ENCODE measurements at regions of chr18 and their contacts with region 1.

Region 1: DNA sequence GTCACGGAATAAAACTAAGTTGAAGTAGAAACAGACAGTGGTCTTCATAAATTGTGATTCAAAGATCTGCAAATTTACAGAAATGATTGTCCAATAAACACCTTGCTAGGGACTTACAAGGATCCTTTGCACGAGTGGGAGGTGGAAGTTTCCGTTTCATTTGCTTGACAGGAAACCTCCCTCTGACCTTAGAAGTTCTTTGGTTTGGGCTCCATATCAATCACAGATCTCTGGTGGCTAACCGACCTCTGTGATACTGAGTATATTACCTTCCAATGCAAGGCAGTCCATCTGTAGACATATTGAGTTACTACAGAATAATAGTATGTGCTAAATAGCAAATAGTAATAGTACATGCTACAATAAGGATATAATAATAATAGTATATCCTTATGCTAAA is 33.7 kb upstream of the RNF152 start:
- DNase-seq: peak; percentile 26
- H3K4me3 Mint-ChIP-seq: peak overlapping the region; percentile 63
- H3K27ac Mint-ChIP-seq: peak overlapping the region; percentile 74
- H3K4me1 Mint-ChIP-seq: peaks cover 40% of the 10 kb centered on the region
- H3K27me3 Mint-ChIP-seq: peaks cover 12% of the 10 kb centered on the region

Region 2: DNA sequence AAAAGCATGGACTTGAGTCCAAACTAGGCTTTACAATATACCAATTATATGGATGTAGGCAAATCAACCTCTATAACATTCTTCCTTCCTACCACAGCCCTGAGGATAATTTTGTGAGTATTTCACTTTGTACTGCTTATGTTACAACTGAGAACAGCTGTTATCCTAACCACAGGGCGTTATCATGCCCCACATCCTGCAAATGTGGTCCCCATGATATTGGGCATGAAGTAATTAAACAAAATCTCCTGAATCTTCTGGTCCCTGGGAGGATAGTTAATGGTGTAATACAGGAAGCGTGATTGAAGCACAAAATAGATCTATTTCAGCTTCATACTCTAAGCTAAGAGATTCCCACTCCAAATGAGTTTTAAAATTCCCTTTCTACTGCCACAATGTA is 369.7 kb before region 1 on chr18:
- intact Hi-C with region 1: no loop called
- DNase-seq: no peak
- H3K4me3 Mint-ChIP-seq: no peak overlapping the region
- H3K27ac Mint-ChIP-seq: no peak overlapping the region
- H3K4me1 Mint-ChIP-seq: peaks cover 4% of the 10 kb centered on the region
- H3K27me3 Mint-ChIP-seq: peaks cover 4% of the 10 kb centered on the region

Region 3: DNA sequence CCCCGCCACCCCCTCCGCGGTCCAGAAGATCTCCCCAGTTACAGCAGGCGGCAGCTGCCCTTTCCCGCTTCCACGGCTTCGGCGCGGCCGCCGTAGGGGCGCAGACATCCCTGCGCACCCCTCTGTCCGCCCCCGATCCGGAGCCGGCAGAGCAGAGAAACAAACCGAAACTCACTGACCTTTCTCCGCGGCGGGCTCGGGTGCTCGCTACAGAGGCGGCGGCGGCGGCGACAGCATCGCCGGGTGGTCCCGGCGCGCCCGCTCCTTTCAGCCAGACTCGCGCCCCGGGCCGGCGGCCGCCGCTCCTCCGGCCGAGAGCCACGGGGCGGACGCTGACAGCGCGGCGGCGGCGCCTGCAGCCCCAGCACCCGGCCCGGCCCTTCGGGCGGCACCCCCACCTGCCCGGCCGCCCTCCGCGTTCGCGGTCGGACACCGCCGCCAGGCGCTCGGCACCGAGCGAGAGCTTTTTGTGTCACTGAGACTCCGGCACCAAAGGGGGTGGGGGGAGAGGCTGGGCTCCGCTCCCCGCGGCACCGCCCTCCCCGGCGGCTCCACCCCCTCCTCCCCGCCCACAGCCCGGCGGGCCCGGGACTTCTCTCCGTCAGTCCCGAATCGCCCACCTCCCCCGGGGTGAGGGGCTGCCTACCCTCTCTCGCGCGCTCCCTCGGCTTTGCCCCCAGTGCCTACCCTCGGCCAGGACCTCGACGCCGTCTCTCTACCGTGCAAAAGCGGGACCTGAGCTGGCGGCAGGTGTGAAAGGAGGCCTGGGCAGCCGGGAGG is 32.4 kb before region 1 on chr18:
- intact Hi-C with region 1: loop called (anchors 5 kb)
- DNase-seq: peak; percentile 53
- H3K4me3 Mint-ChIP-seq: peak overlapping the region; percentile 82
- H3K27ac Mint-ChIP-seq: no peak overlapping the region
- H3K4me1 Mint-ChIP-seq: peaks cover 13% of the 10 kb centered on the region
- H3K27me3 Mint-ChIP-seq: peaks cover 65% of the 10 kb centered on the region

Region 4: GRCh38 chr18:61901323-61901986 is 25.1 kb before region 1 on chr18:
- intact Hi-C with region 1: loop called (anchors 2 kb)
- DNase-seq: no peak
- H3K4me3 Mint-ChIP-seq: no peak overlapping the region
- H3K27ac Mint-ChIP-seq: no peak overlapping the region
- H3K4me1 Mint-ChIP-seq: no peaks in the 10 kb centered on the region
- H3K27me3 Mint-ChIP-seq: peaks cover 41% of the 10 kb centered on the region

Region 5: GRCh38 chr18:61943175-61943964 is 16.8 kb after region 1 on chr18:
- intact Hi-C with region 1: loop called (anchors 1 kb)
- DNase-seq: no peak
- H3K4me3 Mint-ChIP-seq: no peak overlapping the region
- H3K27ac Mint-ChIP-seq: no peak overlapping the region
- H3K4me1 Mint-ChIP-seq: peaks cover 18% of the 10 kb centered on the region
- H3K27me3 Mint-ChIP-seq: peaks cover 16% of the 10 kb centered on the region

Region 6: DNA sequence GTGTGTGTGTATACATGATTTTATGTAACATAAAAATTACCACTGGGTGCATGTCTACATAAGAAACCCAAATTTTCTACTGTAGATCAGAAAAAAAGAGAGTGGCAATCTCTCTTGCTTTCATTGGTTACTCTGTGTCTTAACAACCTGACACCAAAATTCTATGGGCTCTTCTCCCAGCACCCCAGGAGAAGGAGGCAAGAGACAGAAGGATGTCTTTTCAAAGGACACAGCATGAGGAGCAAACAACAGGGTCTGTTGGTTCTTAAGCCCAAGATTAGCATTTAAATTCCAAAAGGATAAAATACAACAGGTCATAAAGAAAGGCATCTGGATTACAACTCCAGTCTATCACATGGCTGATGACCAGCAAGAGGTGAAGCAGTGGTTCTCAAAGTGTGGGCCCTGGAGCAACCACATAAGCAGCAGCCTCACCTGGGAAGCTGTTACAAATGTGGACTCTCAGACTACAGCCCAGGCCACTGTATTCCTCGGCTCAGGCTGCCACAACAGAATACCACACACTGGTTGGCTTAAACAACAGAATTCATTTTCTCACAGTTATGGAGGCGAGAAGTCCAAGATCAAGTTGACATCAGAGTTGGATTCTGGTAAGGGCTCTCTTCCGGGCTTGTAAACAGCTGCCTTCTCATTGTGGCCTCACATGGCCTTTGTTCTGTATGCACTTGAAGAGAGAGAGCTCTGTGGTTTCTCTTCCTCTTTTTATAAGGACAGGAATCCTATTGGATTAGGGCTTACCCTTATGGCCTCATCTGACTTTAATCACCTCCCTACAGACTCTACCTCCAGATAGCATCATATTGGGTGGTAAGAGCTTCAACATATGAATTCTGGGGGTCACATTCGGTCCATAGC is 46.1 kb after region 1 on chr18:
- intact Hi-C with region 1: loop called (anchors 2 kb)
- DNase-seq: no peak
- H3K4me3 Mint-ChIP-seq: no peak overlapping the region
- H3K27ac Mint-ChIP-seq: peak overlapping the region; percentile 27
- H3K4me1 Mint-ChIP-seq: peaks cover 36% of the 10 kb centered on the region
- H3K27me3 Mint-ChIP-seq: peaks cover 2% of the 10 kb centered on the region

Region 7: DNA sequence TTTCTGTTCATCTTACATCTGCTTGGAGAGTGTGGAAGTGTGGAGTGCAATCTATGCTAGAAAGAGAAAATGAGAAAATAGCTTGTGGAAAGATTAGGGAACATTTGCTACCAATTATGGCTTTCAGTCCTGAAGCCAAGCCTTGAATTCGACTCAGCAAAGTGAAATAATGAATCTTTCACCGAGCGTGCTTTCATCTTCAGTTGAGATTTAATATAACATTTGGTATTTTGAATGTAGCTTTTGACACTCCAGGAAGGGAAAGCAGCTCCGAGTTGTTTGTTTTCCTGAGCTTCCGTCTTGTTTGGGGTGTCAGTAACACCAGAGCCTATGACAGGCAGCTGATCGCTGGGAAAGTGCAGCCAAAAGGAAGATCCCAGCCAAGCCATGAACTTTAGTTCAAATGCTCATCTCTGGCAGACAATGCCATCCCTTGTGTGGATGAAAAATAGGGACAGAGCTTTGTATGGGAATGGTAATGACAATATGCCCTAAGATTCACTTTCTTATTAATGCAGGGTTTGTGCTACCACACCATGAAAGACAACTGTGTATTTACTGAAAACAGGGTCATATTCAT is 763.8 kb after region 1 on chr18:
- intact Hi-C with region 1: no loop called
- DNase-seq: no peak
- H3K4me3 Mint-ChIP-seq: no peak overlapping the region
- H3K27ac Mint-ChIP-seq: no peak overlapping the region
- H3K4me1 Mint-ChIP-seq: no peaks in the 10 kb centered on the region
- H3K27me3 Mint-ChIP-seq: peaks cover 2% of the 10 kb centered on the region

Measured in activated T-helper 1 cell treated with anti-CD3 and anti-CD28 coated beads, Interleukin-12 subunit alpha, Interleukin-12 subunit beta, Interleukin-2, Interleukin-4 antibody, amounts not matched to agents 30 ng/mL and 10 ng/mL and 1 ng/mL, durations not matched to agents 14 hours and 24 hours and 36 hours (primary cell).